T-cell (primary cell): ENCODE measurements at regions of chr1 and their contacts with region 1.

Region 1: DNA sequence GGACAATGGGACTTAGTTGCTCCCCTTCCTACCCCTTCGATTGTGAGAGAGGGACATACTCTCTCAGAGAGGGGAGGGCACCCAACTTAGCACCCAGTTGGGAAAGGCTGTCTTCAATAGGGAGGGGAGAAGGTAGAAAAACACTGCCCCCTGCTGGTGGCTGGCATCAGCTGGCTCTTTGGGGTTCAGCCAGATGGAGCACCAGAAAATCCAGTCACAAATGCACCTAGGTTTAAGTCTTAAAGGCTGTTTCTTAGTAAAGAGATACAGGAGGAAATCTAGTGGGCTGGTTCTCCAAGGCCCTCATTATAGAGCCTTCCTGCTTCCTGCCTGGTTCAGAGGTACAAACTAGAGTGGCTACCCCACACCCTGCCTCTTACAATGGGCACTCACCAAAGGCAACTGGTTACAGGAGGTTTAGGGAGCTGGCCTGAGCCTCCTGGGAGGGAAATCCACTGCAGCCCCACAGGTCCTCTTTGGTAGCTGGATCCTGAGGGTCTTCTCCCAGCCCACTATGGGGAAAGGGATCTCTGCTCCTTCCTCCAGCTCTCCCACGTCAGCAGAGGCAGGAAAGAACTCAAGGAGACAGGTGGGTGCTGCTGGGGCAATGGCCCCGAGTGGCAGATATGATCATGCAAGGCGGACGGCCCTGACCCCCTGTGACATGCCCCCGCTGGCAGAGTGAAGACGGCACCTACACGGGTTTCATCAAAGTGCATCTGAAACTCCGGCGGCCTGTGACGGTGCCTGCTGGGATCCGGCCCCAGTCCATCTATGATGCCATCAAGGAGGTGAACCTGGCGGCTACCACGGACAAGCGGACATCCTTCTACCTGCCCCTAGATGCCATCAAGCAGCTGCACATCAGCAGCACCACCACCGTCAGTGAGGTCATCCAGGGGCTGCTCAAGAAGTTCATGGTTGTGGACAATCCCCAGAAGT is 28.3 kb downstream of the EIF2D start:
- DNase-seq: peak; percentile 62 to 93 (median 81)
- ATAC-seq: peak; percentile 38 to 60 (median 54)
- H3K4me3 ChIP-seq: no peak overlapping the region
- H3K4me3 Mint-ChIP-seq: peak overlapping the region; percentile 61 to 96 (median 79)
- H3K27ac ChIP-seq: peak overlapping the region; percentile 94
- H3K27ac Mint-ChIP-seq: peak overlapping the region; percentile 97 to 99
- H3K4me1 ChIP-seq: peaks cover 41 to 73% of the 10 kb centered on the region in 2 experiments
- H3K4me1 Mint-ChIP-seq: peaks cover 58 to 92% (median 89%) of the 10 kb centered on the region in 3 donors
- H3K27me3 ChIP-seq: no peaks in the 10 kb centered on the region
- H3K27me3 Mint-ChIP-seq: no peaks in the 10 kb centered on the region

Region 2: DNA sequence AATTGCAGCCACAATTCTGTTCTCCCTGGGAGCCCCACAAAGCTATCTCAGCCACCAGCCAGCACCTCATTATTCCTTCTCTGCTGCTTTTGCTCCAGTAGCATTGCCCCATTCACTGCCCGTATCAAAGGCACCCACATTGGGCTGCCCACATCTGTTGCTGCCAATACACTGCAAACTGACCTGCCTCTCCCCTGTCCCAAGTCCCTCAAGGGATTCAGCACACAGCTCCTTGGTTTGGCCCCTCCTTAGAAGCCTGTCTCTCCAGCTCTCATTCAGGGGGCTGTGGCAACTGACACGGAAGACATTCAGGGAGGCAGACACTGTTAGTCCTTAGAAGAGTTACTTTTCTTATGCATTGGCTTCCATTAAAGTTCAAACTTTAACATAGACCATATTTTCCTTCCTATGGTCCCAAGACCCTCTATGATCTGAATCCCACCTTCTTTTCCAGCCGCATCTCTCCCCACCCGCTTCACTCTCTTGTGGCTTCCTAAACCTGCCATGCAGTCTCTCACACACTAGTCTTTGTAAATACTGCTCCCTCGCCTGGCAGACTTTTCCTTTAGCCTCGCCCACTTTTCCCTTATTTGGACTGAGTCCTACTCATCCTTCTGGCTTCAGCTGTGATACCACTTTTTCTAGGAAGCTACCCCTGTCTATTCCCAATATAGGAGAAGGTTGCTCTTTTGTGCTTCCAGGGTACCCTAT is 1208.0 kb before region 1 on chr1:
- CTCF ChIA-PET with region 1: no interaction called
- POLR2A ChIA-PET with region 1: no interaction called
- DNase-seq: no peak
- ATAC-seq: no peak
- H3K4me3 ChIP-seq: no peak overlapping the region
- H3K4me3 Mint-ChIP-seq: no peak overlapping the region
- H3K27ac ChIP-seq: no peak overlapping the region
- H3K27ac Mint-ChIP-seq: no peak overlapping the region
- H3K4me1 ChIP-seq: peaks cover 2 to 5% of the 10 kb centered on the region in 2 experiments
- H3K4me1 Mint-ChIP-seq: peaks cover 18 to 29% (median 28%) of the 10 kb centered on the region in 3 donors
- H3K27me3 ChIP-seq: peaks cover 4 to 13% of the 10 kb centered on the region in 2 experiments
- H3K27me3 Mint-ChIP-seq: peaks cover 38 to 45% of the 10 kb centered on the region in 2 donors

Region 3: GRCh38 chr1:206419250-206419649 is 164.7 kb before region 1 on chr1:
- CTCF ChIA-PET with region 1: no interaction called
- POLR2A ChIA-PET with region 1: no interaction called
- DNase-seq: no peak
- ATAC-seq: no peak
- H3K4me3 ChIP-seq: no peak overlapping the region
- H3K4me3 Mint-ChIP-seq: no peak overlapping the region
- H3K27ac ChIP-seq: no peak overlapping the region
- H3K27ac Mint-ChIP-seq: no peak overlapping the region
- H3K4me1 ChIP-seq: no peaks in the 10 kb centered on the region
- H3K4me1 Mint-ChIP-seq: no peaks in the 10 kb centered on the region
- H3K27me3 ChIP-seq: no peaks in the 10 kb centered on the region
- H3K27me3 Mint-ChIP-seq: no peaks in the 10 kb centered on the region

Region 4: DNA sequence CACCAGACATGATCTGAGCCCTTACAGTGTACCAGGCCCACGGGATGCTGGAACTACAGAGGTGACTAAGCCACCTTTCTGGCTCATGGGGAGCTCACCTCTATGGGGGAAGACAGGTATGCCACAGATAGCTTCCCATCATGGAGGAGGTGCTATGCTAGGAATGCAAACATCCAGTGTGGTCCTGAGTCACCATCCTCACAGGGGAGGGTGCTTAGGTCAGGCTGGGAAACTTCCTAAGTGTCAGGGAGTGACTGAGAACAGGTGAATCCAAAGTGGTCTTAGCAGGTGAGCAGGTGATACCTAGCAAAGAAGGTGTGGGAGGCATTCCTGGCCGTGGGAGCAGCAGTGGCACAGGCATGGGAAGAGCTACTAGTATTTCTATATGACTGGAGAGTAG is 85.3 kb before region 1 on chr1:
- CTCF ChIA-PET with region 1: no interaction called
- POLR2A ChIA-PET with region 1: no interaction called
- DNase-seq: no peak
- ATAC-seq: no peak
- H3K4me3 ChIP-seq: no peak overlapping the region
- H3K4me3 Mint-ChIP-seq: no peak overlapping the region
- H3K27ac ChIP-seq: no peak overlapping the region
- H3K27ac Mint-ChIP-seq: peak overlapping the region in 1 of 2 donors; percentile 47
- H3K4me1 ChIP-seq: peaks cover 0 to under 1% of the 10 kb centered on the region in 2 experiments
- H3K4me1 Mint-ChIP-seq: peaks cover 0 to 21% (median 7%) of the 10 kb centered on the region in 3 donors
- H3K27me3 ChIP-seq: no peaks in the 10 kb centered on the region
- H3K27me3 Mint-ChIP-seq: no peaks in the 10 kb centered on the region

Region 5: DNA sequence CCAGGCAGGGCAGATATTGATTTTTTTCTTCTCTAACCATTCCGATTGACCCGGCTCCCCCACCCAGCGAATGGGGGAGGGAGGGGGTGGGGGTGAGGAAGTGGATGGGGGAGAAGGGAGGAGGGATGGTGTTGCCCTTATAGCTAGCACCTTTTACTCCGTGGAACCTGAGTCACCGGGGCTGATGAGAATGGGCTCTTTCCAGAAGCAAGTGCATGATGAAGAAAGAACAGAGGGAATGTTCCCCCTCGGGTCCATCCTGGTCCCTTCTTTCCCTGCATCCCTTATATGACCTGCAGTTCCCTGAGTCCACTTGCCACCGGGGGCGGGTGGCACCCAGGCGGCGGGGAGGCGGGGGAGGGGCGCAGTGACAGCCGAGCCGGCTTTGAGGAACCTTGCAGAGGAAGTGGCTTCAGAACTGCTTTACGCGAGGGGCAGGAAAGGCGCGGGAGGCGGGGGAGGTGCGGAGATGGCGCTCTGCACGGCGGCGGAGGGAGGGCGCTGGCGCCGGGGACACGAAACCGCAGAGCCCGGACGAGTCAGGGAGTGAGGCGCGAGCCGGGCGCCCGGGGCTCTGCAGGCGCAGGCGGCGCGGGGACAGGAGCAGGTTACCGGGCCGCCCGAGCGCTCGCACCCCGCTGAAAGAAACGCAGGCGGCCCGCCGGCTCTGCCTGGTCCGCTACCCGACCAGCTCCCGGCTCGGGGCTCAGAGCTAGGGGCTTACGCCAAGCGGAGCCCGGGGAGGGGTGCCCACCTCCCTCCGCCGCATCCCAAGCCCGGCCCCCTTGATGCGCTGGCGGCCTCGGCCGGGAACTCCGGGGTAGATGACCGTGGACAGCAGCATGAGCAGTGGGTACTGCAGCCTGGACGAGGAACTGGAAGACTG is 27.0 kb before region 1 on chr1:
- CTCF ChIA-PET with region 1: interaction called, 15 to 70 read pairs
- POLR2A ChIA-PET with region 1: interaction called, 5 to 12 read pairs
- DNase-seq: peak; percentile 82 to 94 (median 88)
- ATAC-seq: peak; percentile 74 to 78 (median 76)
- H3K4me3 ChIP-seq: peak overlapping the region; percentile 97 to 100
- H3K4me3 Mint-ChIP-seq: peak overlapping the region; percentile 88 to 97 (median 96)
- H3K27ac ChIP-seq: peak overlapping the region; percentile 81
- H3K27ac Mint-ChIP-seq: peak overlapping the region; percentile 97 to 99
- H3K4me1 ChIP-seq: peaks cover 58 to 75% of the 10 kb centered on the region in 2 experiments
- H3K4me1 Mint-ChIP-seq: peaks cover 71 to 81% (median 77%) of the 10 kb centered on the region in 3 donors
- H3K27me3 ChIP-seq: no peaks in the 10 kb centered on the region
- H3K27me3 Mint-ChIP-seq: no peaks in the 10 kb centered on the region

Region 6: DNA sequence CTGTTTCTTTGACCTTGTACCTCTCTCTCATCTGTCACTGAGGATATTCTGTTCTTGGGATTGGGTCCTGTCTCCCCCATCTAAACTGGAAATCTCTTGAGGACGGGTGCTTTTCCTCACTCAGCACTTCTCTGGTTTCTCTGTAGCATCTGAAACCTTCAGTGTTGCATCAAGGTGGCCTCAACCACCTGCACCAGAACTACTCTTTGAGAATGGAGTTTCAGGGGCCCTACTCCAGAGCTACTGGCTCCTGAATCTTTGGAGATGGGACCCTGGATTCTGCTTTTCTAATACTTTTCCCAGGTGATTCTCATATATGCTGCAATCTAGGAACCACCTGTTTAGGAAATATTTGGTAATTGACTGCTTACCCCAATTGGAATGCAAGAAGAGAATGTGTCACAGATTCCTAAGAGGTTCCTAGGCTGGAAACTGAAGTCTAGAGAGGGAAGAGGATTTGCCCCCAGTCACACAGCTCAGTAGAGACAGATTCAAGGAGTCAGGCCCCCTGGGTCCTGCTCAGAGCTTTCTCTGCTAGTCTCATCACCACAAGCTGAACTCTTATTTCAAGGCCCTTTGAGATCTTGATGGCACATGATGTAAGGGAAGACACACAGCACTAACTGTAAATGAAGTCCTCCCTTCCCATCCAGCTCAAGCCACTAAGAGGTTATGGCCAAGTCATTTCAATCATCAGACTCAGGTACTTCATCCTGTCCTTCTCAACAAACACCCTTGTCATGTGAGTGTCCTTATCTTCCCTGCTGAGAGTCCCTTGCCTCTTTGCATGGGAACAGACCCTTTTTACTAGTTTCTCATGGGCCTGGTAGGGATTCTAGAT is 20.4 kb before region 1 on chr1:
- CTCF ChIA-PET with region 1: interaction called, 4 to 70 read pairs
- POLR2A ChIA-PET with region 1: interaction called, 5 to 12 read pairs
- DNase-seq: no peak
- ATAC-seq: peak in 2 of 4 experiments; percentile 9 to 28
- H3K4me3 ChIP-seq: peak overlapping the region; percentile 11 to 42
- H3K4me3 Mint-ChIP-seq: peak overlapping the region; percentile 68 to 96 (median 75)
- H3K27ac ChIP-seq: peak overlapping the region; percentile 81
- H3K27ac Mint-ChIP-seq: peak overlapping the region; percentile 97 to 99
- H3K4me1 ChIP-seq: peaks cover 81 to 94% of the 10 kb centered on the region in 2 experiments
- H3K4me1 Mint-ChIP-seq: peaks cover 91 to 96% (median 94%) of the 10 kb centered on the region in 3 donors
- H3K27me3 ChIP-seq: no peaks in the 10 kb centered on the region
- H3K27me3 Mint-ChIP-seq: no peaks in the 10 kb centered on the region